WTC11 (cell line): ENCODE measurements at regions of chr2 and their contacts with region 1.

Region 1: DNA sequence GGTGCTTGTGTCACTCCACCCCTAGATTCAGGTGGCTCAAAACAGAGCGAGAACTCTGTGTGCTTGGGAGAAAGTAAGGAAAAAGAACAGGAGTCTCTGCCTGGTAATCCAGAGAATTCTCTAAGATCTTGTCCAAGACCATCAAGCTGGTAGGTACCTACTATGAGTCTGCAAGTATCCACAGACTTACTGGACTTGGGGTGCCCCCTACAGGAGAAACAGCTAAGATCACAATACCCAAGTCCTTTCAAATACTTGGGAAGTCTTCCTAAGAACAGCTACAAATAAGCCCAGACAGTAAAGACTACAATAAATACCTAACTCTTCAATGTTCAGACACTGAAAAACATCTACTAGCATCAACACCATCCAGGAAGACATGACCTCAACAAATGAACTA is 1143.6 kb upstream of the ACVR2A start:
- DNase-seq: peak; percentile 77
- ATAC-seq: peak; percentile 97
- H3K4me3 Mint-ChIP-seq: no peak overlapping the region
- H3K27ac Mint-ChIP-seq: no peak overlapping the region
- H3K4me1 Mint-ChIP-seq: no peaks in the 10 kb centered on the region
- H3K27me3 Mint-ChIP-seq: no peaks in the 10 kb centered on the region
- CTCF ChIP-seq: peak; percentile 63

Region 2: GRCh38 chr2:146615778-146616177 is 85.4 kb before region 1 on chr2:
- CTCF ChIA-PET with region 1: no interaction called
- POLR2A ChIA-PET with region 1: no interaction called
- DNase-seq: no peak
- ATAC-seq: no peak
- H3K4me3 Mint-ChIP-seq: no peak overlapping the region
- H3K27ac Mint-ChIP-seq: no peak overlapping the region
- H3K4me1 Mint-ChIP-seq: no peaks in the 10 kb centered on the region
- H3K27me3 Mint-ChIP-seq: no peaks in the 10 kb centered on the region
- CTCF ChIP-seq: no peak

Region 3: DNA sequence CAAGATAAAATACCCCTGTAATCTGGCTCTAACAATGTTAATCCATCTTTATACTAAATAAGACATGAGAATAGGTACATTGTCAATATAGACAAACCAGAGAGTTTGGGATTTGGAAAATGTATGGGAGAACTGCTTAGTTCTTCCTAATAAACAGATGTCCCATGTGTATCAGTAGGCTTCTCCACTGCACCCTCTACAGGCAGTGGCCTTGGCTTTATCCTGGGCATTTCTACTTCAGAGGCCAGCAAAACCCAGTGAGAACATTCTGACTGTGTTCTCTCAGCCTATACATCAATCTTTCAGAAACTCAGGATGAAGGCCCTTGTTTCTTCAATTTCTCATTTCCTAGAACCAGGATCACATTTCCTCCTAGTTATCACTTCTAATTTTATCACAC is 23.9 kb before region 1 on chr2:
- CTCF ChIA-PET with region 1: interaction called, 10 read pairs
- POLR2A ChIA-PET with region 1: no interaction called
- DNase-seq: peak; percentile 20
- ATAC-seq: peak; percentile 75
- H3K4me3 Mint-ChIP-seq: no peak overlapping the region
- H3K27ac Mint-ChIP-seq: no peak overlapping the region
- H3K4me1 Mint-ChIP-seq: peaks cover 36% of the 10 kb centered on the region
- H3K27me3 Mint-ChIP-seq: no peaks in the 10 kb centered on the region
- CTCF ChIP-seq: no peak

Region 4: DNA sequence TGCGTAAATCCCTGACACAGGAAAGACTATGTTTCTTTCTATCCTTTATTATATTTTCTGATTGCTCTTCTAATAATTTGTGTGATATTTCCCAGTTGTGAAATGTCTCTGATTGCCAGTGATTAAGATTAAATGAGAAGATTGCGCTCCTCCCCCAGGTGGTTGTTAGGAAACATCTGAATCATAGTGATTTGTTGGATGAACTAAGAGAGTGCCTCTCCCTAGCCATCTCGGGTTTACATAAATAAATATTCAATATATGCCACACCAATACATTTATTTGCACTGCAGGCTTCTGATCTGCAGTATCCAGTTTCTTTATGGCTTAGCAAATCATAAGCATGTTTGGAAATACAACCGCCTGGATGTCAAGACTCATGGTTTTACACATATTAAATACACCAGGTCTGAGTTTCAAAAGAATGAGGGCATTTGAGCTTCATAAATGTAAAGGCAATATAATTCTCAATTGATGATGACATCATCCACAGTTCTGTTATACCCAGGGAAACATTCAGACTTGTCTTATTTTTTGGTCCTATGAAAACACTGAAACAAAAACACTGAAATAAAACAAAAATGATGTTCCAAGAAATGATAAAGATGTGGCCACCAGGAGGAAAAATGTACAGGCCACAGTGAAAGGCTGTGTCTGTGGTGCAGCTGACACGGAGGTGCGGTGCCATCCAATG is 316.9 kb after region 1 on chr2:
- CTCF ChIA-PET with region 1: no interaction called
- POLR2A ChIA-PET with region 1: no interaction called
- DNase-seq: no peak
- ATAC-seq: no peak
- H3K4me3 Mint-ChIP-seq: no peak overlapping the region
- H3K27ac Mint-ChIP-seq: no peak overlapping the region
- H3K4me1 Mint-ChIP-seq: peaks cover 23% of the 10 kb centered on the region
- H3K27me3 Mint-ChIP-seq: no peaks in the 10 kb centered on the region
- CTCF ChIP-seq: no peak